WTC11 (cell line): ENCODE measurements at regions of chr1 and their contacts with region 1.

Region 1: DNA sequence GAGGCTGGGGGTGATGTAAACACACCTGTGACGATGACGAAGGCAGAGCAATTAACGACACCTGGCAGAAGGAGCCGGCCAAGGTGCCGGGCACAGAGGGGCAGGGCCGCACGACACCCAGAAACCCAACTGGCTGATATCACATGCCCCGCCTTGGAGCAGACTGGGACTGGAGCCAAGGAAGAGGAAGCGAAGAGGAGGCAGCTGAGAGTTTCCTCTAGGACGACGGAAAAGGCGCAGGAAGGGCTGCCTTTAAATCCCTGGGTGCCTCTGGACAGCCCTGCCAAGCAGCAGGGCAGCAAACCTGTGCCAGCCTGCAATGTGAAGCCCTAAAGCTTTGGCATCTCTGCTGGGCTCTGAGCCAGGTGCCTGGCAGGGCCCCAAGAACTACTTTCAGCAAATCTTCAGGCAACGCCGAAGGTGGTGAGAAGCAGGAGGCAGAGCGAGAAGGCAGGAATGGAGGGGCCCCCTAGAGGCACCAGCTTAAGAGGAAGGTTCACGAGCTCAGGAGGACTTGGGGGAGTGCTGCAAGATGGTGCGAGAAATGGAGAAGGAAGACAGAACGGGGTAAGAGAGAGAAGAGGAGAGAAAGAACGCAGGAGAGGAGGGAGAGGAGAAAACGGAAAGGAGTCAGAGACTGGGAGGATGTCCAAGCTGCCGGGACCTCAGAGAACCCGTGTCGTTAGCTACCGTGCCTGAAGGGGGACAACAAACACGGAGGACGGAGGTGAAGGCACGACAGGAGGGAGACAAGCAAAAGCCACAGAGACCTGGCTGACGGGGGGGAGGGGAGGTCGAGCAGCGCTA is 25.3 kb upstream of the PEF1 start:
- DNase-seq: no peak
- ATAC-seq: peak; percentile 59
- H3K4me3 Mint-ChIP-seq: peak overlapping the region; percentile 18; the same call in 1 of the 2 replicates
- H3K27ac Mint-ChIP-seq: 0 out of 2 replicates have a peak overlapping the region, but pooled peaks have one; percentile 16
- H3K4me1 Mint-ChIP-seq: peaks cover 19% of the 10 kb centered on the region
- H3K27me3 Mint-ChIP-seq: no peaks in the 10 kb centered on the region
- CTCF ChIP-seq: no peak

Region 2: GRCh38 chr1:31683997-31684396 is 14.0 kb after region 1 on chr1:
- CTCF ChIA-PET with region 1: interaction called, 22 read pairs
- POLR2A ChIA-PET with region 1: no interaction called
- DNase-seq: peak; percentile 81
- ATAC-seq: peak; percentile 93
- H3K4me3 Mint-ChIP-seq: no peak overlapping the region
- H3K27ac Mint-ChIP-seq: no peak overlapping the region
- H3K4me1 Mint-ChIP-seq: no peaks in the 10 kb centered on the region
- H3K27me3 Mint-ChIP-seq: no peaks in the 10 kb centered on the region; the same call in 1 of the 2 replicates
- CTCF ChIP-seq: peak; percentile 54

Region 3: GRCh38 chr1:32426489-32427255 is 756.7 kb after region 1 on chr1:
- CTCF ChIA-PET with region 1: no interaction called
- POLR2A ChIA-PET with region 1: no interaction called
- DNase-seq: peak; percentile 28
- ATAC-seq: peak; percentile 72
- H3K4me3 Mint-ChIP-seq: no peak overlapping the region
- H3K27ac Mint-ChIP-seq: no peak overlapping the region
- H3K4me1 Mint-ChIP-seq: peaks cover 28% of the 10 kb centered on the region
- H3K27me3 Mint-ChIP-seq: no peaks in the 10 kb centered on the region
- CTCF ChIP-seq: no peak